Dendritic cell treated with granulocyte-macrophage colony-stimulating factor and Interleukin-4, amounts not matched to agents 40 ng/mL and 50 ng/mL, for 4 days (primary cell): ENCODE measurements at regions of chr11 and their contacts with region 1.

Region 1: GRCh38 chr11:85627998-85628770 is at the start of gene TMEM126B:
- H3K4me3 Mint-ChIP-seq: peak within 1 kb of the TSS; percentile 95
- H3K27ac Mint-ChIP-seq: peak within 1 kb of the TSS; percentile 93
- H3K4me1 Mint-ChIP-seq: peaks cover 21% of the 10 kb centered on the region
- H3K27me3 Mint-ChIP-seq: peaks cover 2% of the 10 kb centered on the region

Region 2: DNA sequence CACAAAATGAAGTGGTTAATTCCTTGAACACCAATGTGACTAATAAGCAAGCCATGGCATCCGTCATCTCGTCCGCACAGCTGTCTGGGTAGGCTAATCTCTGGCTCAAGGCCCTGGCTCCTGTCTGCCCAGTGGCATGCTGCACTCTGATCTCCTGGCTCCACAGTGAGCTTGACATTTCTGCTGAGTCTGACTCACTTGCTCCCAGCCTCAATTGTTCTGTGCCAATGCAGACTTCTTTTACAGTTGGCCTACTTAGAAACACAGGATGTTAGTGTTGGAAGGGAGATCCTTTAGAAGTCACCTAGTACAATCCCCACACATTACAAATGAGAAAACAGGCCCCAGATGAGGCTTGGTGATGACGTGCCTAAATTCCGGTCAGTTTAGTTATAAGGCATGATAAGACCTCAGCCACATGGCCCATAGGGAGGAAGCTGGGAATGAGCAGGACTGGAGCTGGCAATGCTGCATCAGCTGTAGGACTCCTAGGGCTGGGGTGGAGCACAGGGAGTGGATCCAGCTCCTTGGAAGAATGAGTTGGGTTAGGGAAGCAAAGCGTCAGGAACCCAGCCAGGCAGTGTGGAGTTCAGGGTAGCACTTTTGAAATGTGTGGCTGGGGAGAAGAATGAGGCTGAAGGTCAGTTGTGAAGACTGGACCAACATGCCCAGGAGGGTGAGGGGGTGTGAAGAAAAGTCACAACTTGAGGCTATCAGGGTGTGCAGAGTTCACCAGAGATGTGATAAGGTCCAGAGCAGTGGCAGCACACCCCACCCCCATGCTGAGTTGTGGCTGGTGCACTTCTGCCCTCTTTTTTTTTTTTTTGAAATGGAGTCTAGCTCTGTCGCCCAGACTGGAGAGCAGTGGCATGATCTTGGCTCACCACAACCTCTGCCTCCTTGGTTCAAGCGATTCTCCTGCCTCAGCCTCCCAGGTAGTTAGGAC is 546.2 kb after region 1 on chr11:
- intact Hi-C with region 1: no loop called
- H3K4me3 Mint-ChIP-seq: no peak overlapping the region
- H3K27ac Mint-ChIP-seq: no peak overlapping the region
- H3K4me1 Mint-ChIP-seq: peaks cover 11% of the 10 kb centered on the region
- H3K27me3 Mint-ChIP-seq: no peaks in the 10 kb centered on the region

Region 3: DNA sequence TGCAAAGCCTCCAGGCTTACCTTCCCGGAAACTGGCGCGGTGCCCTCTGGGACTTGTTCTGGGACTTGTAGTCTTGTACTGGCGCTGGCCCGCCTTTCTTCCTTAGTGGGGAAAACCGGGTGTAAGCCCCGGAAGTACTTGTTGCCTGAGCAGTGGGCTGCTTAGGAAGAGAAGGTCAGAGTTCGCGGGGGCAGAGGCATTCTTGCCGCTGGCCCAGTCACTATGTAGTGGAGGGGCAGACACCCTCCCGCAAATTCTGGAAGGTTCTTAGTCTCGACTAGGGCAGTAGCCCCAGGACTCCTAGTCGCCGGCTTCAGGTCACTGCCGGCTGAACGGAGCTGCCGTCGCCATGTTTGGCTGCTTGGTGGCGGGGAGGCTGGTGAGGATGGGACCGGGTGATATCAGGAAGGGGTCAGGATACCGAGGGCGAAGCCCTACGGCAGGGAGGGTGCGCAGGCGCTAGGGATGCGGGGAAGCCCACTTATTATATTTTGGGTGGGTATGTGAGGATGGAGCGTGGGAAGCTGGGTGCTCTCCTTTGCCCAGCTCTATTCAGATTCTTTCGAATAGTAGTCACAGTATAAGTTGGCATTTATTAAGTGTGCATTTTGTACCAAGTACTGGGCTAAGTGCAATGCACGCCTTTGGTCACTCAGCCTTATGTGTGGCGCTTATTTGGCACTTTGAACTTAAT is 674.1 kb after region 1 on chr11 and contains the start of gene HIKESHI:
- intact Hi-C with region 1: loop called (anchors 10 kb)
- H3K4me3 Mint-ChIP-seq: peak within 1 kb of the TSS; percentile 97
- H3K27ac Mint-ChIP-seq: peak within 1 kb of the TSS; percentile 95
- H3K4me1 Mint-ChIP-seq: peaks cover 20% of the 10 kb centered on the region
- H3K27me3 Mint-ChIP-seq: peaks cover 1% of the 10 kb centered on the region